Cardiac septum (tissue), 1 donor: ENCODE measurements at regions of chr2 and their contacts with region 1.

Region 1: DNA sequence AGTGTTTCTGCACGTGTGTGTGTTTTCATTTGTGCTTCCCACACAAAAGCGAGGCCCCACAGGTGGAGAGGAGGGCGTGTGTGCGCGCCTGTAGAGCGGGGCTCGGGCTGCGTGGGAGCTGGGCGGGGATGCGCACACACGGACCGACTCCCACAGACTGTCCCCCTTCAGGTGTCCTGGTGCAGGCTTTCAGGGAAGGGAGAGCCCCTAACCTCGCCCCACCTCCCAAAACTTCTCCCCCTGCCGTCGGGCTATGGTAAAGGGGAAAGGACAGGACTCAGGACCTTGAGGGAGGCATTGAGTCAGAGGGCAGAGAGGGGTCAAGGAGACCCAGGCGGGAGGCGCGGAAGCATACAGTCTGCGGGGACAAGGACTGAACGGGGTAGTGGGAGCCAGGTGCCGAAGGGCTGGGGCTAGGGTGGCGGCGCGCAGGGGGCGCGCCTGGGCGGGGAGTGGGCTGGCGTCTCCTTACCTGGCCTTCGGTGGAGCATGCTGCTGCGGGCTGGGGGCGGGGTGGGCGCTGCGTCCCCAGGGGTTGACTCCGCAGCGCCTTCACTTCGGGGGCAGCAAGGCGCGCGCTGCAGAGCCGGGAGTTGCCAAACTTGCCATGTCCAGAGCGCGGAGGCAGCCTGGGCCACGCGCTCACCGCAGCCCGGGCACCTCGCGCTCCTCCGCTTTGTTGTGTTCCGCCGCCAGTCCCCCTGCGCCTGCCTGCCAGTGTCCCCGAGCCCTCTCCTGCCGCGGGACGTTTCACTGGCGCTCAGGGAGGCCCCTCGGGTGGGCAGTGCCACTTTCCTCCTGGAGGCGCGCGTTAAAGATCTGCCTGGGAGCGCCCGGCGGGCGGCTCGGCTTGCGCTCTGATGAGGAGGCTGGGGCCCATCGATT is 302.0 kb downstream of the NCKAP5 start:
- DNase-seq: no peak

Region 2: DNA sequence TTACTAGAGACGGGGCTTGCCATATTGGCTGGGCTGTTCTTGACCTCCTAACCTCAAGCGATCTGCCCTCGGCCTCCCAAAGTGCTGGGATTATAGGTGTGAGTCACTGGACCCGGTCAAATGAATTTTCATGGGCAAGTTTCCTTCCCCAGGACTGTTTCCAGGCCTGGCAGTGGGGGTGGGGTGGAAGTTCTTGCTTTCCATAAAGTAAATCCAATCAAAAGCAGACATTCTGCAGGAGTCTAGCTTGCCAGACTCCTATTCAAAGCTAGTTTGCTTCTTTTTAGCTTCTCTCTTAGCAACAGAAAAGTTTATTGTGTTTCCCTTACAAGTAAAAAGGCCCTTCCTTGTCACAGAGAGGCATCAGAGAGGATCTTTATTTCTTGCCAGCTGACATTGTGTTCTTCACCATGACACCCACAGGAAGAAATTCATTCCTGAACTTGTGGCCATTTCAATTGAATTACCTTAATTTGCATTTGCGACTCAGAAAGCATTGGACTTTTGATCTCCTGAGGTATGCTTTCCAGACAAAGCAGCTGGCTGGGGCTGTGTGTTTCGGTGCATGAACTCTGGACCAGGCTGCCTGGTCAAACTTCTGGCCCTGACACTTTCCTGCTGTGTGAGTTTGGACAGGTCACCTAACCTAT is 634.2 kb before region 1 on chr2:
- intact Hi-C with region 1: no loop called
- DNase-seq: no peak

Region 3: GRCh38 chr2:132670496-132671150 is 595.7 kb before region 1 on chr2:
- intact Hi-C with region 1: no loop called
- DNase-seq: no peak

Region 4: DNA sequence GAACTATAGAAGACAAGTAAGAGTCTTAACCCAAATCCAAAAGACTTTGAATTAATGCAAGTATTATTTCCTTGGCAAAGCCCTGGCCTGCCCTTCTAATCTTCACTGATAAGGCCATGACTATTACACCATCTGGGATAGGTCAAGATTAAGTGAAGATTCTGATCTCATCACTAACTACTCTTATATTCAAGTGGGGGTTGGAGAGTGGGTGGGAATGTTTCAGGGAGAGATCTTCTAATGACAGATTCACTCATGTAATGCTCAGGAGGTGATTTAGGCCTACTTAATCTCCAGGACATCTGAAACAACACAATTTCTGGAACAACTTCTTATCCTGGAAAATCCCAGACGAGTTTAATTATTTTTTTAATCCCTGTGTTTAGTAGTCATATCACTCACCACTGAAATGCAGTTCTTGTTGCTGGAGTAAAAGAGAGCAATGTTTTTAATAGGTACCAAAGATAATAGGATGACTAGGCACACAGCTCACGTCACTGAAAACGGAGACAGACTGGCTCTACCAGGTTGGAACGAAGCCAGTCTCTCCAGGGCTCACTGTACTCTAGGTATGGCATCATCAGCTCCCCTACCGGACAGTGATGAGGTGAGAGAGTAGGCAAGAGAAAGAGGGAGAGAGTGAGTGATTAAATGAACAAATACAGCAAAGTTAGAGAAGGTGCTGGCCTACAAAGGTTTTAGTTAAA is 168.8 kb after region 1 on chr2:
- intact Hi-C with region 1: no loop called
- DNase-seq: no peak

Region 5: DNA sequence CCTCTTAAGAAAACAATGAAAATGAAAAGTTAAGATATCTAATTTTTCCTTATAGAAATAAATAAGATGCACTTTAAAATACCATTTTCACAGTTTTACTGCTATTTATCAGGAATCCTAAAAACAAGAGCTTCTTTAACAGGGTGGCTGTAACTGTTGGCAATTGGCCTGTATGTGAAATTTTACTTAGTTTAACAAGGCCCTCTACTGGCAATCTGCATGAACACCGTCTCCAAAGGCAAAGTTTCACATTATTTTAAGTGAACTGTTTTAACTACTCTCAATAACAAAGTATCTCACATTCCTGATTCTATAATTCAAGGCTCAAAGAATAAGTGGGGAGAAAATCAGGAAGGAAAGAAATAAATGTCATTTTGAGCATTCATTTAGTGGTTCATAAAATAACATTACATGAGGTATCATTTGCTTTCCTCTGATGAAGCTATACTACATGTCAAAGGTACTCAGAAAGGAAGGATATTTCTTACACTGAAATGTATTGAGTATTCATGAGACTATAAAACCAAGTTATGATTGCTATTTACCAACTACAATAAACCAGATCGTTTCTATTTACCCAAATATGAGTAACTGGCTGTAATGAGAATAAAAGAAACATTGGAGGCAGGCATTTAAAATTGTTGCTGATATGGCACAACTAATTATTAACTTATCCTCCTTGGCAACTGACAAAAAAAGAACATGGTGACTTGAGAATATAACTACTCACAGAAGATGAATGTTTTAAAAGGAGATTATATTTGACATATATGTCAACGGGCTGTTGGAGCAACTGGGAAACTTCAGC is 295.0 kb after region 1 on chr2:
- intact Hi-C with region 1: loop called (anchors 10 kb)
- DNase-seq: no peak

Region 6: DNA sequence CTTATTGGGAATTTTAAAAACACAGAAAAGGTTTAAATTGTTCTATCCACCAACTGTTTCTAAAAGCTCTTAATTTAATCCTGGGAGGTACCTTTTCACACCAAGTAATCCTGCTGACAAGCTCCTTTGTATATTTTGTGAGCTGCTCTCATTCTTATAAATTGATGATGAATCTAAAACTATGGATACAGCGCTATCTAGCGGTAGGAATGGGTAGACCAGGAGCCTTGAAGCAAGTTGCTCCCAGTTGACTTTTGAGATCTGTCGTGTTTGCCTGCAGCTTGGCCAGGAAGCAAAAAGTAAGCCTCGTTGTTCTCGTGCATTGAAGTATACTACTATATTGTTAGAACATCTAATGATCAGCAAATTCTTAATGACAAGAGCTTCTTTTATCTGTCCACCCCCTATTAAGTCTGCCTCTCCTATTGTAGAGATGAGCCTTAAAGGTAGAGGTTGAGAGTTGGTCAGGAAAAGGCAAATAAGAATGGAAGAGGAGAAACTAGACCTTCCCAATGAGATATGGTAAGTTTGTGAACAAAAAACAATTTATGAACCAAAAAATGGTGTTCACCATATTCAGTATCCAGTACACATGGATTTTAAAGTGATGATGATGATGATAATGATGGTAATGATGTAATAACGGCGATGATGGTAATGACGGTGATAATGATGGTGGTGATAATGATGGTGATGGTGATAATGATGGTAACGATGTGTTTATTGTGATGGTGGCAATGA is 514.0 kb after region 1 on chr2:
- intact Hi-C with region 1: loop called (anchors 5 kb)
- DNase-seq: no peak